ENCODE measurements at regions of chr17 and their contacts with region 1.

Region 1: DNA sequence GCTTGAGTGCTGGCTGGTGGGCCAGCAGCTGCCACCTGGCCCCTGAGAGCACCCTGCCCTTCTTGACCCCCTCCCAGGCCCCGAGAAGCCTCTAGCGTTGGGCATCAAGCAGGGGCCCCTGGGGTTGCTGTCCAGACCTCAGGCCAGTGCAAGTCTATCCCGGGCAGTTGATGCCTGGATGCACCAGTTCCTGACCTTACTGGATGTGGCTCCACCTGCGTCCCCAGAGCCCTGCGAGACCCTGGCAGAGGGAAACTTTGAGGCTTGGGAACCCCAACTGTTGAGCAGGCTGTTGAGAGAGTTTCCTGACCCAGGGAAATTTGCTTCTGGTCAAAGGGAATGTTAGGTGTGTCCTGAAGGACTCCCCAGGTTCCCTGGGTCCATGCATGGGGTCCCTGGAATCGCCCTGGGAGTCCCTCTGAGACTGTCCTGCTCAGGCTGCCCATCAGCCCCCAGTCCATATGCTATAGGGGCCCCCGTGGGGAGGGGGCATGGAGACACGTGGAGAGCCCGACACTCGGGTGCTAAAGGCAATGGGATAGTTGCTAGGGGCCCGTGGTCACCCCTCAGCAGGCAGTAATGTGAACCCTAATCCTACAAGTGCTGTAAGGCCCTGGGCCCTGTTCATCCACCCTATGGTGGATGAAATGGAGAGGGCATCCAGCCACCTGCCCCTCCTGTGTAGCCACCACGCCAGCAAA is 46.4 kb downstream of the RAB11FIP4 start:
- DNase-seq: no peak
- H3K4me3 ChIP-seq: no peak overlapping the region
- H3K27ac ChIP-seq: no peak overlapping the region
- H3K4me1 ChIP-seq: peaks cover 0 to 7% (median 5%) of the 10 kb centered on the region in 4 donors
- H3K27me3 ChIP-seq: peaks cover 0 to 19% (median 0%) of the 10 kb centered on the region in 4 donors
- CTCF ChIP-seq: no peak
- EP300 ChIP-seq: no peak
- POLR2A ChIP-seq: no peak

Region 2: DNA sequence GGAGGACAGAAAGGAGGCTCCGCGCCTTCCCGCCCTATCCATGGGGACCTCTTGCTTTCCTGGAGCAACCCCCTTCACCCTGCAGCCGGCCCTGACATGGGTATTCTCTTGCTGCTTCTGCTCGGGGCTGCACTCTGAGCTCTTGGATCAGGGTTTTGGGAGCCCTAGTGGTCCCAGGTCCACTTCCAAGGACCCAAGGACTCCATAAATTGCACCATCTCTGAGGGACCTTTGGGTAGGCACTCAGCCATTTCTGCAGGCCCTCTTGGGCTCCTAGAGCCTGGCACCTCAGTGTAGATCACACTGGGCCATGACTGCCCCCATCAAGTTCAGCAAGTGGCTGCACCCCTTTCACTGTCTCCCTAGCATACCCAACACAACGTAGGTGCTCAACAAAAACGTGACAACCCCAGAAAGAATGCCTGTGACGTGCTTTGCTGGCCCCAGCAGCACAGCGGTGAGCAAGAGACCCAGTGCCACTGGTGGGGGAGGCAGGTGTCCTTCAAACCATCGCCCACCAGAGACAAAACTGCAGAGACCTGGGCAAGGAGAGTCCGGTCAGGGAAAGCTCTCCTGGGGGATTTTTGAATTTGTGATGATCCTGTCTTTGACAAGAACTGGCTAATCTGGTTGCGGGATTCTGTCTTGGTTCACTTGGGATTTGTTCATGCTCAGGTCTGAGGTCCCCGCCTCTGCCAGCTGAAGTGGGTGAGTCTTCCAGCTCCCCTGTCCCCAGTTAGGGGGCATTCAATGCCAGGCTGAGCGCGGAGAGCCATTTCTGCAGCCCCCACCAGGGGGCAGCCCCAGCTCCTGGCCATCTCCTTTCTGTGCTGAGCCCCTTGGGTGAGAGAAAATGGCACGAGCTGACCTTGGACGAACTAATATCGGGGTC is 48.9 kb before region 1 on chr17:
- intact Hi-C with region 1: no loop called
- DNase-seq: no peak
- H3K4me3 ChIP-seq: no peak overlapping the region
- H3K27ac ChIP-seq: no peak overlapping the region
- H3K4me1 ChIP-seq: peaks cover 11 to 20% (median 16%) of the 10 kb centered on the region in 4 donors
- H3K27me3 ChIP-seq: peaks cover 3 to 54% (median 26%) of the 10 kb centered on the region in 4 donors
- CTCF ChIP-seq: peak in 2 of 3 experiments; percentile 35 to 58
- EP300 ChIP-seq: no peak
- POLR2A ChIP-seq: no peak

Region 3: GRCh38 chr17:31524926-31525800 is 87.3 kb after region 1 on chr17:
- intact Hi-C with region 1: loop called (anchors 1 kb)
- DNase-seq: peak; percentile 97
- H3K4me3 ChIP-seq: no peak overlapping the region
- H3K27ac ChIP-seq: no peak overlapping the region
- H3K4me1 ChIP-seq: peaks cover 0 to 7% (median 3%) of the 10 kb centered on the region in 4 donors
- H3K27me3 ChIP-seq: peaks cover 0 to 9% (median 0%) of the 10 kb centered on the region in 4 donors
- CTCF ChIP-seq: peak; percentile 82 to 88 (median 86)
- EP300 ChIP-seq: no peak
- POLR2A ChIP-seq: no peak

Region 4: GRCh38 chr17:31858642-31859473 is 421.0 kb after region 1 on chr17 and contains the start of gene COPRS:
- intact Hi-C with region 1: loop called (anchors 5 kb)
- DNase-seq: peak; percentile 96
- H3K4me3 ChIP-seq: peak within 1 kb of the TSS; percentile 70 to 89 (median 84)
- H3K27ac ChIP-seq: peak within 1 kb of the TSS; percentile 83 to 94 (median 88)
- H3K4me1 ChIP-seq: peaks cover 13 to 44% (median 40%) of the 10 kb centered on the region in 4 donors
- H3K27me3 ChIP-seq: no peaks in the 10 kb centered on the region
- CTCF ChIP-seq: peak; percentile 18 to 40 (median 24)
- EP300 ChIP-seq: no peak
- POLR2A ChIP-seq: no peak
- total RNA-seq, gene COPRS: 123 to 141 (median 129) TPM